Ovary (tissue), 10 donors: ENCODE measurements at regions of chr2 and their contacts with region 1.

Region 1: GRCh38 chr2:43226558-43226954 is at the start of gene ZFP36L2:
- DNase-seq: peak; percentile 97 to 98 (median 97)
- H3K4me3 ChIP-seq: peak within 1 kb of the TSS; percentile 84
- H3K27ac ChIP-seq: peak within 1 kb of the TSS; percentile 90 to 92
- H3K4me1 ChIP-seq: peaks cover 15% of the 10 kb centered on the region
- H3K27me3 ChIP-seq: no peaks in the 10 kb centered on the region
- CTCF ChIP-seq: peak in 1 of 3 donors; percentile 40
- EP300 ChIP-seq: no peak
- POLR2A ChIP-seq: peak; percentile 77
- total RNA-seq, gene ZFP36L2: 115 to 369 (median 254) TPM

Region 2: DNA sequence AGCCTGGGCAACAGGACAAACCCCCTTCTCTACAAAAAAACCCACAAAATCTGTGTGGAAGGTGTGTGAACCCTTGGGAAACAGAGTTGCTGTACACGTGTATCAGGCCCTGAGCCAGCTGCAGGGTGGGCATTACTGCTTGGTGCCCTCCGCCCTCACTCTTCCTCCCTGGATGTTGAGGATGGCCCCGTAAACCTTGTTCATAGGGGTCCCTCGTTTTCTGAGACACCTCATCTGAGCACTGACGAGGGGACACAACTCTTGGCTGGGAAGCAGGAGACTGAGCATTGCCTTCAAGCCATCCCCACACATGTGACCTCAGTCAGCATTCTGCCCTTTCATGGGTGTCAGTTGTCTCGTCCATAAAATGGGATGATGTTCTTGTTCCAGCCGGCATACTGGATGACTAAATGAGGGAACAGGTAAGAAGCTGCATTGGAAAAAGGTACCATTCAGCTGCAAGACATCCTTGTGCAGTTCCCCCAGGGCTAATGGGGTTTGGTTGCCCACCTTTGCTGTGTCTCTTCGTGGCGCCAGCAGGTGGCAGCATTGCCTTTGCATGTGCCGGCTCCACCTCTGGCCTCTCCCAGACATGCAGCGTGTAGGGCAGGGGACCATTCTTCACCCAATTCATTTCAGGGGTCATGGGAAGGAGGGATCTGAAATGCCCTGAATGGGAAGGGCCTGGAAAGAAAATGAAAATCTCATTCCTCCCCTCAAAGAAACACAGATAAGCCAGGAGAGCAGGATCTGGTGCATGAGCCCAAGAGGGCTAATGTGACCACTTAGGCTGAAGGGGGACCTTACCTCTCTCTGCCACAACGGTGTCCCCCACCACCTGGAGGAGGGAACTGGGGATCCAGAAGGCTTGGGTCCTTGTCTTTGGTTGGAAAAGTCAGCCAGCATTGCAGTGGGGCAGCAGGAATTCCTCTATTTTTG is 397.8 kb before region 1 on chr2:
- intact Hi-C with region 1: loop called in 3 of 4 experiments (anchors 5 kb)
- DNase-seq: peak; percentile 78 to 89 (median 85)
- H3K4me3 ChIP-seq: no peak overlapping the region
- H3K27ac ChIP-seq: peak overlapping the region in 1 of 2 donors; percentile 7
- H3K4me1 ChIP-seq: peaks cover 14% of the 10 kb centered on the region
- H3K27me3 ChIP-seq: no peaks in the 10 kb centered on the region
- CTCF ChIP-seq: peak; percentile 76 to 98 (median 96)
- EP300 ChIP-seq: no peak
- POLR2A ChIP-seq: peak; percentile 17

Region 3: DNA sequence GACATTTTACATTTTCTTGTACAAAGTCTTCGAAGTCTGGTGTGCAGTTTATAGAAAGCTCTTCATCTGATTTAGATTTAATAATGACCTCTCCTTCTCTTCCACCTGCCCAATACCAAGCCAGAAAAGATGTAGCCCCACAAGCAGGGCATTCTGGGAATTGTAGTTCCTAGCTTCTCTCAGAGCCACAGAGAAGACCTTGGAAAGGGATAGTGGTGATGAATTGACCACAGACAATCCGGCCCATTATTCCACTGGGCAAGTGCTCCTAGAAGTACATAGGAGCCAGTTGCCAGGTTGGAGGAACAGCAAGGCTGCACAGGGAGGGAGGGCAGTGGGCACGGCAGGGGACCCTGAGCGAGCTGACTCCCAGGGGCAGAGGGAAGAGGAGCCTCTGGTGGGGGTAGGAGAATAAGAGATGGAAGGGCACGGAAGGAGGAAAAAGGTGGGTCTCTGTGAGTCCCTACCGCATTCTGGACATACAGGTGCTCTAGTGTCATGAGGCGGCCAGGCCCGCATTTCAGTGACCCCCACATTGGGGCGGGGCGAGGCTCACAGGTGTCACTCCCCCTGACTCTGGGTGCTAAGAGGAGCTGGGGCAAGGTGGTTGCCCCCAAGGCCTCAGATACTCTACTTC is 281.7 kb before region 1 on chr2:
- intact Hi-C with region 1: loop called in 2 of 4 experiments (anchors 5 kb)
- DNase-seq: no peak
- H3K4me3 ChIP-seq: no peak overlapping the region
- H3K27ac ChIP-seq: no peak overlapping the region
- H3K4me1 ChIP-seq: peaks cover 18% of the 10 kb centered on the region
- H3K27me3 ChIP-seq: no peaks in the 10 kb centered on the region
- CTCF ChIP-seq: no peak
- EP300 ChIP-seq: no peak
- POLR2A ChIP-seq: no peak

Region 4: DNA sequence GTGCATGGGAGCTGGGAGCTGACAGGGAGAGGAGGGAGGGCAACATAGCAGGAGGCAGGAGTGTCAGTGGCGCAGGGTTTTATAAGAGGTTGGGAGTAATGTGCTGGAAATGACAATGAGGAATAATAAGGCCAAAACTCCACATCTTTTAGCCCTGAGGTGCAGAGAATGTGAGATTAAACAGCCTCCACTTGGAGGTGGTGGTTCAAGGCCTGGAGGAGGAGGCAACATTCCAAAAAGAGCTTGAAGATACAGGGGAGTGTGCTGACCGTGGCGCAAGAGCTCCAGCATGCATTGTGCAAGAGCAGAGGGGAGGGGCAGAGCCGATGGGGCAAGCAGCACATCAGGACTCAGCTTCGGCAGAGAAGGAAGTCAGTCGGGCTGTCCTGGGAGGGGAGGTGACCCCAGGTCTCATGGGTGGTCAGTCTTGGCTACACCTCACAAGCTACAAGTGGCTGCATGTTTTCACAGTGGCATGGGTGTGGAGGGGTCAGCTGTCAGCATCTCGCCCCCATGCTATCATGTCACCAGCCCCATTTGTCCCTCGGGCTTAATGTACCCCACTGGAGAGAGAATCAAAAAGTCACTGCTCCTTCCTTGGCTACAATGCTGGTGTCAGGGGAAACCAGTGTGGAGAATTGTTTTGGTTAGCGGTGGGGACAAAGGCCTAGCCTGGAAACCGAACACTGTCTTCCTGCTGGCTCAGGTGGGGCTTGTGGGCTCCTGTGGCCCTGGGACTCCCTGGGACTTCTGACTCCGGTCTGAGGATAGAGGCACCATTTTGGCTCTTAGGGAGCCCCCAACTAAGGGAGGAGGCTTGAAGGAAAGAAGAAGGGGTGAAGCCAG is 208.2 kb before region 1 on chr2:
- intact Hi-C with region 1: loop called in 1 of 4 experiments (anchors 5 kb)
- DNase-seq: peak; percentile 92 to 98 (median 94)
- H3K4me3 ChIP-seq: no peak overlapping the region
- H3K27ac ChIP-seq: peak overlapping the region; percentile 31 to 86
- H3K4me1 ChIP-seq: peaks cover 7% of the 10 kb centered on the region
- H3K27me3 ChIP-seq: no peaks in the 10 kb centered on the region
- CTCF ChIP-seq: peak in 1 of 3 donors; percentile 6
- EP300 ChIP-seq: peak; percentile 84
- POLR2A ChIP-seq: peak; percentile 85

Region 5: DNA sequence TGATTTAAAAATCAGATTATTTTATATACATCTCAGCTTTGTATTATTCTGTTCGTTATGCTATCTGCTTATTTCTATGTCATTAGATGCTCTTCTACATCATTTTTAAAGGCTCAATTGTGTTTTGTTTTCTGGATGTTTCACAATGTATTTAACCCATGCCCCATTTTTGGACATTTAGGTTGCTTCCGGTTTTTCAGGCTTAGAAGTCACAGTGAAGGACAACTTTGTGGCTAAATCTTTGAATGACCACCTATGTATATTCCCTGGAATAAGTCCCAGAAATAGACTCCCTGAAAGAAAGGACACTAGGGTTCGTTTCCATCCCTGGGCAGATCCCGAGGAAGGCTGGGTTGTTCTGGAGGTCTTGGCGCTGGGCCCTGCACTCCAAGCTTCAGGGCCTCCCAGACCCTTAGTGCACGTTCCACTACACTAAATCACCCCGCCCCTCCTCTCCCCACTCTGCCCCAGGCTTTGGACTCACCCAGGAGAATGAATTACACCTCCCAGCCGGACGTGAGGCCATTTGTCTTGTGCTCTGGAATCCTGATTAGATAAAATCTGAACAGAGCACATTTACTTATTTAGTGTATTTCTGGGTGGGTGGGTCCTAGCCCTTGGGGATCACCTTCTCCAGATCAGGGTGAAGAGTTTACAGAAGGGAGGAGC is 188.4 kb before region 1 on chr2:
- intact Hi-C with region 1: no loop called
- DNase-seq: peak in 4 of 5 donors; percentile 60 to 83 (median 62)
- H3K4me3 ChIP-seq: no peak overlapping the region
- H3K27ac ChIP-seq: no peak overlapping the region
- H3K4me1 ChIP-seq: peaks cover 21% of the 10 kb centered on the region
- H3K27me3 ChIP-seq: no peaks in the 10 kb centered on the region
- CTCF ChIP-seq: no peak
- EP300 ChIP-seq: no peak
- POLR2A ChIP-seq: no peak

Region 6: GRCh38 chr2:43305517-43305916 is 79.0 kb after region 1 on chr2:
- intact Hi-C with region 1: loop called in 1 of 4 experiments (anchors 10 kb)
- DNase-seq: peak in 1 of 5 donors; percentile 71
- H3K4me3 ChIP-seq: no peak overlapping the region
- H3K27ac ChIP-seq: peak overlapping the region in 1 of 2 donors; percentile 24
- H3K4me1 ChIP-seq: peaks cover 16% of the 10 kb centered on the region
- H3K27me3 ChIP-seq: no peaks in the 10 kb centered on the region
- CTCF ChIP-seq: no peak
- EP300 ChIP-seq: no peak
- POLR2A ChIP-seq: no peak

Region 7: DNA sequence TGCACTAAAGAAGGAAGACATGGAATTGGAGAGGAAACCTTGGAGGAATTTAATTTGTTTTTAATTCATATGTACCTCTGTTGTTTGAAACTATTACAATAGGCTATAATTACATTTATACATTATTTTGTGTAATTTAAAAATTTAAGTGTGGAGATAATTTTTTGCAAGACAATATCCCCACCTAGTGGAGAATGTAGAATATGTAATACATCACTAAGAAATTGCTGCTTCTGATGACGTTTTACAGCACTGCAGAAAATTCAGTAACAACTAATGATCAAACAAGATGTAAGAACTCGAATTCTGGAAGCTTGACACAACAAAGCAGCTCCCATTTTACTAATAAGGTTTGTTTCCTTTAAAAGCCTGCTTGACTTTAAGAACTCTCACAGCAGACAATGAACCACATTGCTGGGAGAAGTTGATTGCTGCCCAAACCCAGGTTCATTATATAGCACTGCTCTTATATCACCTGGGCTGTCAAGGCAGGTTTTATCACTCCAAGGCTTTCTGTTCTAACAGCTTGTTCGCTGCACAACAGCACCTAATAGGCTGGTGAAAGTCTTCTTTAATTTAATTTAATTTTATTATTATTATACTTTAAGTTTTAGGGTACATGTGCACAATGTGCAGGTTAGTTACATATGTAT is 315.9 kb after region 1 on chr2:
- intact Hi-C with region 1: loop called in 1 of 4 experiments (anchors 5 kb)
- DNase-seq: no peak
- H3K4me3 ChIP-seq: no peak overlapping the region
- H3K27ac ChIP-seq: no peak overlapping the region
- H3K4me1 ChIP-seq: peaks cover 8% of the 10 kb centered on the region
- H3K27me3 ChIP-seq: no peaks in the 10 kb centered on the region
- CTCF ChIP-seq: peak; percentile 33 to 84 (median 70)
- EP300 ChIP-seq: no peak
- POLR2A ChIP-seq: no peak

Region 8: GRCh38 chr2:43934567-43934966 is 708.0 kb after region 1 on chr2:
- intact Hi-C with region 1: no loop called
- DNase-seq: no peak
- H3K4me3 ChIP-seq: no peak overlapping the region
- H3K27ac ChIP-seq: no peak overlapping the region
- H3K4me1 ChIP-seq: no peaks in the 10 kb centered on the region
- H3K27me3 ChIP-seq: no peaks in the 10 kb centered on the region
- CTCF ChIP-seq: no peak
- EP300 ChIP-seq: no peak
- POLR2A ChIP-seq: no peak